Endothelial cell of umbilical vein (primary cell): ENCODE measurements at regions of chr9 and their contacts with region 1.

Region 1: DNA sequence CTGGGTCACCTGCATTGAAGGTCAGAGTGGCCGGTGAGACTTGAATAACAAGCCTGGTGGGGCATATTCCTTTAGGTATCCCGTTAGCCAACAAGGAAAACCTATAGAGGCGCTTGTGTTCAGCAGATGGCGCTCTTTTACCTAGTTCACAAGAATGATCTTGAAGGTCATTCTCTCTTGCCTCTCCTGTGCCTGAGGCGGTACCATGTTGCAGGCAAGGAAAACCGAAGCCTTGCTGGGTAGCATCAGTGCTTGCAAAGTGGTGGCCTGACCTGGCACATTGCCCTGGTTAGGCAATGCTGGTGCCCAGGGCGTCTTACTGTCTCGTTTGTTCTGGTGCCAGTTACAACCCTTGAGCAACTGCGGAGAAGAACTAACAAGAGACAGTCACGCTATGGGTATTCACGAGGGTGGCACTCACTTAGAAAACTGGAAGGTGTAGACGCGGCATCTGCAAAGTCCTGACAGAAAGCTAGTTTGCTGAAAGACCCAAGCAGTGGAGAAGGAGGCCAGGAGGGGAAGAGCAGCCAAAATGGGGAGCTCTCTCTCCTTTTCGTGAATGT is 56.7 kb downstream of the AOPEP start:
- DNase-seq: peak; percentile 81
- H3K4me3 ChIP-seq: no peak overlapping the region
- H3K27ac ChIP-seq: no peak overlapping the region
- H3K4me1 ChIP-seq: no peaks in the 10 kb centered on the region
- H3K27me3 ChIP-seq: no peaks in the 10 kb centered on the region
- CTCF ChIP-seq: peak; percentile 64 to 65
- POLR2A ChIP-seq: no peak

Region 2: DNA sequence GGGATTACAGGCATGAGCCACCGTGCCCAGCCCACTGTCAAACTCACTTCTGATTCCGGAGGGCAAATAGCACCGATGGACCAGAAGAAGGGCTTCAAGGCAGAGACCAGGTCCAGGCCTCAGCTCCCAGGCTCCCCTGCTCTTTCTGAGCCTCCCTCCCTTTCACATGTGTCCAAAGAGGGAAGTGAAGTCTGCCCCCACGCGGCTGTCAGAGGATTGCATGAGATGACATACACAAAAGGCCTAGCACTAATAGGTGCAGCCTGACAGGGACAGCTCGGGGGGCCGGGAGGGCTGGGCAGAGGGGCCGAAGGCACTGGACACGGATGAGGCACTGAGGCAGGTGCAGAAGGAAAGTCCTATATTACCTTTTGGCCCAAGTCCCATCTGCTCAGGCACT is 159.9 kb before region 1 on chr9:
- CTCF ChIA-PET with region 1: no interaction called
- POLR2A ChIA-PET with region 1: no interaction called
- dilution Hi-C with region 1: no loop called
- intact Hi-C with region 1: no loop called
- DNase-seq: no peak
- H3K4me3 ChIP-seq: no peak overlapping the region
- H3K27ac ChIP-seq: no peak overlapping the region
- H3K4me1 ChIP-seq: peaks cover 2% of the 10 kb centered on the region
- H3K27me3 ChIP-seq: no peaks in the 10 kb centered on the region
- CTCF ChIP-seq: peak in 1 of 2 donors; percentile 36
- POLR2A ChIP-seq: no peak

Region 3: GRCh38 chr9:94672811-94673487 is 110.2 kb before region 1 on chr9:
- CTCF ChIA-PET with region 1: interaction called, 3 read pairs
- POLR2A ChIA-PET with region 1: no interaction called
- dilution Hi-C with region 1: no loop called
- intact Hi-C with region 1: loop called (anchors 2 kb)
- DNase-seq: no peak
- H3K4me3 ChIP-seq: no peak overlapping the region
- H3K27ac ChIP-seq: no peak overlapping the region
- H3K4me1 ChIP-seq: peaks cover 6% of the 10 kb centered on the region
- H3K27me3 ChIP-seq: no peaks in the 10 kb centered on the region
- CTCF ChIP-seq: no peak
- POLR2A ChIP-seq: no peak

Region 4: DNA sequence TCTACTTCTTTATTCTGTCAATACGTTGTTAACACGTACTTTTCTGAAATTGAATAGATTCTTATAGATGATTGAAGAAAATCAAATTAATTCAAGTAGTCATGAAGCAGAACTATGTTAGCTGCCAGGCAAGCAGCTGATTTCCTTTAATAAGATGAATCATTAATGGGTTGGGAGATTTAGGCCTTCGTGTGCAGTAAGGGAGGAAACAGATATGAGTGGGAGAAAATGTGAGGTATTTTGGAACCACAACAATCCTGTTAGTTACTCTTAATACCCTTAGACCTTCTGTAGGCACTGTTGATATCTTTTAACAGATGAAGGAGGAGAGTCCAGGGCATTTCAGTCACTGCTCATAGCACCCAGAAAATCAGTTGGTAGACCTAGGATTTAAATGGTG is 64.3 kb after region 1 on chr9:
- CTCF ChIA-PET with region 1: no interaction called
- POLR2A ChIA-PET with region 1: no interaction called
- dilution Hi-C with region 1: no loop called
- intact Hi-C with region 1: loop called (anchors 5 kb)
- DNase-seq: peak; percentile 88
- H3K4me3 ChIP-seq: no peak overlapping the region
- H3K27ac ChIP-seq: peak overlapping the region; percentile 15
- H3K4me1 ChIP-seq: peaks cover 11% of the 10 kb centered on the region
- H3K27me3 ChIP-seq: no peaks in the 10 kb centered on the region
- CTCF ChIP-seq: no peak
- POLR2A ChIP-seq: no peak

Region 5: GRCh38 chr9:94928691-94929372 is 145.6 kb after region 1 on chr9:
- CTCF ChIA-PET with region 1: no interaction called
- POLR2A ChIA-PET with region 1: no interaction called
- dilution Hi-C with region 1: no loop called
- intact Hi-C with region 1: loop called (anchors 1 kb)
- DNase-seq: peak; percentile 35
- H3K4me3 ChIP-seq: no peak overlapping the region
- H3K27ac ChIP-seq: peak overlapping the region; percentile 97
- H3K4me1 ChIP-seq: peaks cover 19% of the 10 kb centered on the region
- H3K27me3 ChIP-seq: no peaks in the 10 kb centered on the region
- CTCF ChIP-seq: no peak
- POLR2A ChIP-seq: no peak

Region 6: DNA sequence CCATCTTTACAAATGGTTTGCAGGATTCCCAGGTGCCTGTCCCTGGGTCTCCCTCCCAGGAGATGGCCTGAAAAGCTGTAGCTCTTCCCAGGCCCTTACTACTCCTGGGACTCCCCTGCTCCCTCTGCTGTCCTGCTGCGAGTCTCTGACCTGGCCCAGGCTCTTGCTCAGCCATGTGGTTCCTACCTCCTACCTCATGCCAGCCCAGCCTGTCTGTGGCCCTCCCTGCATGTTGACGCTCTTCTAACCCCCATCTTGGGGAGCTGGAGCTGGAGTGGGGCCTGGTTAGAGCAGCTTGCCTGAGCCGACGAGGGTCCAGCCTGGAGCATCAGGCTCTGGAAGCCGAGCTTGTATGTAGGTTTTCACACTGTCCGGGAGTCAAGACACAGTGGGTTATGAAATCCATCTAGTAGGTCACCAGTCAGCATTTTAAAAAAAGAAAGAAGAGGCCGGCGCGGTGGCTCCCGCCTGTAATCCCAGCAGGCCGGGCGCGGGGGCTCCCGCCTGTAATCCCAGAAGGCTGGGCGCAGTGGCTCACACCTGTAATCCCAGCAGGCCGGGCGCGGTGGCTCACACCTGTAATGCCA is 289.9 kb after region 1 on chr9:
- CTCF ChIA-PET with region 1: interaction called, 42 read pairs
- POLR2A ChIA-PET with region 1: no interaction called
- dilution Hi-C with region 1: no loop called
- intact Hi-C with region 1: loop called (anchors 1 kb)
- DNase-seq: no peak
- H3K4me3 ChIP-seq: no peak overlapping the region
- H3K27ac ChIP-seq: no peak overlapping the region
- H3K4me1 ChIP-seq: no peaks in the 10 kb centered on the region
- H3K27me3 ChIP-seq: no peaks in the 10 kb centered on the region
- CTCF ChIP-seq: peak in 1 of 2 donors; percentile 44
- POLR2A ChIP-seq: no peak